ENCODE measurements at regions of chr9 and their contacts with region 1.

Region 1: DNA sequence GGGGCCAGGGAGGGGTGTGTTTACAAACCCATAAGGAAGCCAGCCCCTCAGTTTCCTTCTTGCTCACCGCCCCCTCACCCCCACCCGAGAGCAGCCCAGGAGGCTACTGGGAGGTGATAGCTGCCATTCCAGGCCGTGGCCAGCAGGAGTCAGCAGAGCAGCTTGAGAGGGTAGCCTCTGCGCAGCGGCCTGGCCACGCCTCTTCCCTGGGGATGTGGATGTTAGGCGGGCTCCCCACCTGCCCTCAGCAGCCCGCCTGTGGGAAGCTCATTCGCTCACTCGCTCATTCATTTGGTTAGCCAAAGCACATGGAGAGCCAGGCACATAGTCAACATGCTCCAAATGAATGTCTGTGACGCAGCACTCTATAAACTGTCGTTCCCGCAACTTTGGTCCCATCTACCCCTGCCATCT is 6.1 kb upstream of the DPM2 start:
- DNase-seq: peak; percentile 90
- H3K4me3 ChIP-seq: no peak overlapping the region
- H3K27ac ChIP-seq: no peak overlapping the region
- H3K4me1 ChIP-seq: peaks cover 0 to 18% (median under 1%) of the 10 kb centered on the region in 4 donors
- H3K27me3 ChIP-seq: no peaks in the 10 kb centered on the region
- CTCF ChIP-seq: peak; percentile 94

Region 2: GRCh38 chr9:127828262-127829031 is 115.3 kb before region 1 on chr9:
- intact Hi-C with region 1: no loop called
- DNase-seq: peak; percentile 90 to 93
- H3K4me3 ChIP-seq: peak overlapping the region; percentile 28 to 41
- H3K27ac ChIP-seq: peak overlapping the region; percentile 68 to 69
- H3K4me1 ChIP-seq: peaks cover 0 to 50% (median 21%) of the 10 kb centered on the region in 4 donors
- H3K27me3 ChIP-seq: no peaks in the 10 kb centered on the region
- CTCF ChIP-seq: peak in 1 of 2 experiments; percentile 6

Region 3: DNA sequence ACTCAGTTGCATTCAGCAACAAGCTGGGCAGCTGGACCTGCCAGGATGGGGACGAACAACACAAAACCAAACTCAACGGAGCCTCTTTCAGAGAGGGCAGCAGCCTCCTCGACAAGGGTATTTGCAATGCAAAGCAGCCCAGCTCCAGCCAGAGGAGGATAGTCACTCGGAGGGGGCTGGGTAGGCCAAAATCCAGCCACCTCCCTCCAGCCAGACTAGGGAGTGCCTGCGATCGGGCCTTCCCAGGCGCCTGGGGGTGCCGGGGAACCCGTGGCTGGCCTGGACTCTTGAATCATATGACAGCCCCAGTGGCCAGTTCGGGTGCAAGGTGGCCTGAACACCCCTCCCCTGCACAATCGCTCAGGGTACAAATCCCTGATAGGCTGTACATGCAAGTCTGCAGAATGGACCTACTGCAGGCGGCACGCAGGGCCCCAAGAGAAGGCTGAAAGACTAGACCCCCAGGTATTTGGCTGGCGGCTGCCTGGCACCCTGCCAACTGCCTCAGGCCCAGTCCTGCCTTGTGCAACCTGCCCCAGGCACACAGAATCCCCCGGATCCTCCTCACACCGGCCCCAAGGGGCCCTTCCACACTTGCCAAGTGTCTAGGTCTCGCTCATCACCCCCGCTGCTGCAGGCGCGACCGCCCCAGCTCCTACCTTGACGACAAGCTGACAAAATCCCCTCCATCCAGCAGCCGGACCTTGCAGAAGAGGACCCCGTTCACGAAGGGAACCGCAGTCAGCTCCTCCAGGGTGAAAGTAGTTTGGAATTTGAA is 35.8 kb after region 1 on chr9:
- intact Hi-C with region 1: loop called (anchors 5 kb)
- DNase-seq: peak; percentile 64 to 85
- H3K4me3 ChIP-seq: peak overlapping the region; percentile 69 to 76
- H3K27ac ChIP-seq: peak overlapping the region; percentile 82 to 84
- H3K4me1 ChIP-seq: peaks cover 14 to 64% (median 52%) of the 10 kb centered on the region in 4 donors
- H3K27me3 ChIP-seq: no peaks in the 10 kb centered on the region
- CTCF ChIP-seq: no peak

Region 4: GRCh38 chr9:128033609-128034008 is 89.9 kb after region 1 on chr9:
- intact Hi-C with region 1: loop called (anchors 2 kb)
- DNase-seq: no peak
- H3K4me3 ChIP-seq: no peak overlapping the region
- H3K27ac ChIP-seq: no peak overlapping the region
- H3K4me1 ChIP-seq: peaks cover 0 to 6% (median 0%) of the 10 kb centered on the region in 4 donors
- H3K27me3 ChIP-seq: no peaks in the 10 kb centered on the region
- CTCF ChIP-seq: no peak

Region 5: GRCh38 chr9:128117613-128118471 is 174.1 kb after region 1 on chr9:
- intact Hi-C with region 1: loop called (anchors 5 kb)
- DNase-seq: peak; percentile 88 to 94
- H3K4me3 ChIP-seq: no peak overlapping the region
- H3K27ac ChIP-seq: no peak overlapping the region
- H3K4me1 ChIP-seq: peaks cover 0 to 8% (median 4%) of the 10 kb centered on the region in 4 donors
- H3K27me3 ChIP-seq: no peaks in the 10 kb centered on the region
- CTCF ChIP-seq: peak; percentile 100

Measured in tibial artery (tissue), 4 donors.